K562 (cell line): ENCODE measurements at regions of chr18 and their contacts with region 1.

Region 1: DNA sequence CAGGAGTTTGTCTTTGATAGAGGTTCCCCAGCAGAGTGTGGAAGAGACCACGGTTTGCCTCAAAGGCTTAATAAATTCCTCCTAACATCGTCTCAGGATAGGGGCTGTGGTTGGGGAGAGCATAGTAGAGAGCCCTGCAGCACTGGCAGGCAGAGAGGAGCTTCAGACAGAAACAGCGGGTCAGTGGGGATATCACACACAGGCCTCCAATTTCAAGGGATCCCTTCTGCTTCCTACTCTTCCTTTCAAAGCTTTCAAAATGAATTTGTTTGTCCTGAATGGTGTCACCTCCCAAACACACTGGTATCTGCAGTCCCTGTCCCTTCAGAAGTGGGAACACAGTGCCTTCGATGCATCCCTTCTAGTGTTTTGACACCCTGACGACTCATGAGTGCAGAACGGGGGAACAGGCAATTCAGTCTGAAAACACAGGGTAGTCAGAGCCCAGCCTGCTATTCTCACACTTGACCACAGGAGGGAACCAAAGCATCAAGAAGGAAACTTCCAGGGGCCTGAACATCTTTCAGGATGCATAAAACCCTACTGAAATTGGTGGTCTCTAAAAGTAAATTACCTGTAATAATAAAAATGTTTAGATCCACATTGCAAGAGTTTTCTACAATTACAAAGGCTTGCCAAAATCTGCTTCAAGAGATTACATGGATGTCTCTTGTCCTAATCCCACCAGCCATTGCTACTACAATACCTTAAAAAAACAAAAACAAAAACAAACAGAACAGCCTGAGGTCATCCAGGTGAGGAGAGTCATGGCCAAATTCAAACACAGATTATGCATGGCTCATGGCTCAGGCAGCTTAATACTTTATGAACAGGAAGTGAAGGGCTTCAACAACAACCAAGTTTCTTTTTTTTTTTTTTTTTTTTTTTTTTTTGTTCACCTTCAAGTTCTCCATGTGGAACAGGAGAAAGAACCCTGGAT is 49.8 kb downstream of the SLC14A2 start:
- DNase-seq: peak; percentile 55 to 66 (median 61)
- ATAC-seq: peak; percentile 82
- H3K4me3 ChIP-seq: no peak overlapping the region
- H3K27ac ChIP-seq: no peak overlapping the region
- H3K4me1 ChIP-seq: peaks cover 7 to 8% of the 10 kb centered on the region in 2 experiments; a peak in 3 of 5 replicates
- H3K27me3 ChIP-seq: peaks cover 0 to 13% of the 10 kb centered on the region in 2 experiments; a peak in 2 of 5 replicates
- CTCF ChIP-seq: peak; percentile 69 to 83 (median 75)
- EP300 ChIP-seq: no peak
- POLR2A ChIP-seq: no peak
- RAD21 ChIP-seq: peak; percentile 76 to 82

Region 2: DNA sequence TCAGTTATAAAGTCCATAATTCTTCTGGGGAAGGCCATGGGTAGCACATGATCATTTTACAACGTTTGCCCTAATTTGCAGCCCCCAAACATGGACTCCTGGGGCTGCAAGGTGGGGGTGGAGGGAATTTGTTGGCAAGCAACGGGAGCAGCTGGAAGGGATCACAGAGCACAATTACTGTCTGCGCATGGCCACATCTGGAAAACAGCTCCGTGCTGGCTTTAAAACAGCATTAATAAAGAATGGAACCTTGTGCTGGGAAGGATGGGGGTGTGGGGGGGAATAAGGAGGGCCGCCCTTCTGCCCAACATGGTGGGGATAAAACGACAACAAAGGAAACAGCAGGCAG is 110.7 kb before region 1 on chr18:
- CTCF ChIA-PET with region 1: no interaction called
- POLR2A ChIA-PET with region 1: no interaction called
- in situ Hi-C with region 1: no loop called
- intact Hi-C with region 1: no loop called
- DNase-seq: no peak
- ATAC-seq: no peak
- H3K4me3 ChIP-seq: no peak overlapping the region
- H3K27ac ChIP-seq: no peak overlapping the region
- H3K4me1 ChIP-seq: no peaks in the 10 kb centered on the region
- H3K27me3 ChIP-seq: peaks cover 0 to under 1% of the 10 kb centered on the region in 2 experiments; a peak in 2 of 5 replicates
- CTCF ChIP-seq: no peak
- EP300 ChIP-seq: no peak
- POLR2A ChIP-seq: no peak
- RAD21 ChIP-seq: no peak

Region 3: DNA sequence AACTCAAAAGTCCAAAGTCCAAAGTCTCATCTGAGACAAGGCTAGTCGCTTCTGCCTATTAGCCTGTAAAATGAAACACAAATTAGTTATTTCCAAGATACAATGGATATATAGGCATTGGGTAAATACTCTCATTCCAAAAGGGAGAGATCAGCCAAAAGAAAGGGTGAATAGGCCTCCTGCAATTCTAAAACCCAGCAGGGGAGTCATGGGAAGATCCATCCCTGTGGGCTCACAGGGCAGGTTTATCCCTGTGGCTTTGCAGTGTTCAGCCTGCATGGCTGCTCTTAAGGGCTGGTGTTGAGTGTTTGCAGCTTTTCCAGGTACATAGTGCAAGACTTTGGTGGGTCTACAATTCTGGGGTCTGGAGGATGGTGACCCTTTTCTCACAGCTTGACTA is 37.8 kb after region 1 on chr18:
- CTCF ChIA-PET with region 1: no interaction called
- POLR2A ChIA-PET with region 1: no interaction called
- in situ Hi-C with region 1: no loop called
- intact Hi-C with region 1: no loop called
- DNase-seq: no peak
- ATAC-seq: no peak
- H3K4me3 ChIP-seq: no peak overlapping the region
- H3K27ac ChIP-seq: no peak overlapping the region
- H3K4me1 ChIP-seq: no peaks in the 10 kb centered on the region
- H3K27me3 ChIP-seq: no peaks in the 10 kb centered on the region
- CTCF ChIP-seq: no peak
- EP300 ChIP-seq: no peak
- POLR2A ChIP-seq: no peak
- RAD21 ChIP-seq: no peak

Region 4: GRCh38 chr18:45722899-45723298 is 57.8 kb after region 1 on chr18:
- CTCF ChIA-PET with region 1: interaction called, 3 read pairs
- POLR2A ChIA-PET with region 1: interaction called, 3 read pairs
- in situ Hi-C with region 1: no loop called
- intact Hi-C with region 1: loop called (anchors 2 kb)
- DNase-seq: peak; percentile 87 to 88 (median 88)
- ATAC-seq: peak; percentile 98
- H3K4me3 ChIP-seq: no peak overlapping the region
- H3K27ac ChIP-seq: no peak overlapping the region
- H3K4me1 ChIP-seq: peaks cover 0 to 8% of the 10 kb centered on the region in 2 experiments; a peak in 2 of 5 replicates
- H3K27me3 ChIP-seq: peaks cover 9 to 21% of the 10 kb centered on the region in 2 experiments; a peak in 4 of 5 replicates
- CTCF ChIP-seq: peak; percentile 71 to 83 (median 77)
- EP300 ChIP-seq: peak; percentile 85
- POLR2A ChIP-seq: no peak
- RAD21 ChIP-seq: peak; percentile 71

Region 5: DNA sequence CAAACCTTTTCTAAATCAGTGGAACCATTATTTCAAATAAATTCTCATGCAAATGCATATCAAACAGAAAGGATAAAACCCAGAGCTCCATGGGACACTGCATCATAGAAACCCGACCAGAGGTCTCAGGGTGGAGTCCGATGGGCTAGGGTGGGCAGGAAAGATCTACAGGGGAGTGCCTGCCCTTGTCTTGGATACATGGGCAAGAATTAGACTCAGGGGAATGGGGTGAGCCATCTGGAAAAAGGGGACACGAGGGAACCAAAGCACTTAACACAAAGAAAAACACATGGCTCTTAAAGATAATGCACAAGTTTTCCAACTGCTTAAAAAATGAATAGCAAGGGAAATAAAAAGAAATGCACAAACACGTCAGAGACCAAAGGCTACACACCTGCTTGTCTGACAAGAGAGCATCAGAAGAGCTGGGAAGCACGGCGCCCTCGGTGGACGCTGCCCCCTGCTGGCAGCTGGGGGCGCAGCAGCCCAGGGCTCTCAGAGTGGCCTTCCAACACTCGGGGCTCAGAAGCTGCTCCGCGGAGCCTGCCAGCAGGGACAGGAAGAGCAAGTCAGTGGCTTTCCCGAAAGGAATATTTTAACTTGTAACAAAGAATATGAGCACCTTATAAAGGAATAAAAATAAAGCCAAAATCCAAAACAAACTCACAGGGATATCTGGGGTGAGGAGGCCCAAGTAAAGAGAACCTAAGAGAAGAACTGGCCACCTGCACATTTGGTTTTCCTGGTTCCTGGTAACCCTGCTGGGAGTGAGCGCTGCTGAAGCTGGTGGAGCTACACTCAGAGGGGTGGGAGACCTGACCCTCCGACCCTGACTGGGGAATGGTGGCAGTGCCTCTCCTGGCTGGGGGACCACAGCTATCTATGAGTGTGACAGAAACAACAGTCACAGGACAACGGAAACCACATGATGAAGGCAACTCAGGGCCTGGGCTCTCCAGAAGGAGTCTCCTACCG is 214.9 kb after region 1 on chr18:
- CTCF ChIA-PET with region 1: interaction called, 4 read pairs
- POLR2A ChIA-PET with region 1: interaction called, 5 read pairs
- in situ Hi-C with region 1: no loop called
- intact Hi-C with region 1: loop called (anchors 10 kb)
- DNase-seq: peak; percentile 63 to 70 (median 66)
- ATAC-seq: peak; percentile 99
- H3K4me3 ChIP-seq: no peak overlapping the region
- H3K27ac ChIP-seq: no peak overlapping the region
- H3K4me1 ChIP-seq: peaks cover 0 to 2% of the 10 kb centered on the region in 2 experiments; a peak in 1 of 5 replicates
- H3K27me3 ChIP-seq: no peaks in the 10 kb centered on the region
- CTCF ChIP-seq: peak; percentile 83 to 91 (median 84)
- EP300 ChIP-seq: no peak
- POLR2A ChIP-seq: no peak
- RAD21 ChIP-seq: peak; percentile 77 to 78

Region 6: DNA sequence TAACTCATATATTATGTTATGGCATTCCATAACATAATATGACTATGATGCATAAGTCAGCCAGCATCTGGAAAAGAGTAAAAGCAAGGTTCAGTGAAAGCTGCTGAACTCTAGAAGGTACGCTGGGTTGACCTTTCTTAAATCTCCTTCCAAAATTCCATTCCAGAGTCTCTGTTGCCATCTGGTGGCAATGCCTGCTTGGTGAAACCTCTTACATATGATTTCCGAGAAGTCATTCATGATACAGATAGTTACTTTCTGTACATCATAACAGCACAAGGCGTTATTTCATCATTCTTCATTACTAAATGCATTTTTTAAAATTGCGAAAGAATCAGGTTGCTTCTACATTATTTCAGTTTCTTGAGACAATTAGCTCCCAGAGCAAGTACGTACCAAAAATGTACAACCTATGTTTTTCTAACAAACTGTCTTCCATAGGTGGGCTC is 309.0 kb after region 1 on chr18:
- CTCF ChIA-PET with region 1: interaction called, 6 read pairs
- POLR2A ChIA-PET with region 1: interaction called, 3 read pairs
- in situ Hi-C with region 1: no loop called
- intact Hi-C with region 1: loop called (anchors 1 kb)
- DNase-seq: peak; percentile 13 to 73 (median 29)
- ATAC-seq: peak; percentile 91
- H3K4me3 ChIP-seq: no peak overlapping the region
- H3K27ac ChIP-seq: no peak overlapping the region
- H3K4me1 ChIP-seq: peaks cover 0 to 5% of the 10 kb centered on the region in 2 experiments; a peak in 1 of 5 replicates
- H3K27me3 ChIP-seq: no peaks in the 10 kb centered on the region
- CTCF ChIP-seq: peak; percentile 54 to 89 (median 68); a peak in 5 of 6 replicates
- EP300 ChIP-seq: no peak; the same call in 1 of the 2 replicates
- POLR2A ChIP-seq: no peak
- RAD21 ChIP-seq: peak; percentile 77 to 88